HepG2 (cell line): ENCODE measurements at regions of chr15 and their contacts with region 1.

Region 1: DNA sequence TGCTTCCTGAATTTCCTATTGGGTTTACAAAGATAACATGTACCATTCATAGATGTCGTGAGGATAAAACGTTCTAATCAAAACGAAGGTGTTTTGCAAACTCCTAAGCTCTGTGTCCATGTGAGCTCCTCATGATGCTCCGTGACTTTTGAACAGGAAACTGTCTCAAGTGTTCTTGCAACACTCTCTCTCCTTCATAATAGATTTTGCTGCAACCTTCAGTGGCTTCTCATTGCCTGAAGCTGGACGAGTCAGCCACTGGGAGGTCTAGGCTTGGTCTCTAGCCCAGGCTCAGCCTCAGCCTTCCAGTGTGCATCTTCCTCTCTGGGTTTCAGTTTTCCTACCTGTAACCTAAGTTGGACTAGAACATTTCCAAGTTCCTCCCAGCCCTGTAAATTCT is 18.7 kb upstream of the BCL2A1 start:
- DNase-seq: no peak
- ATAC-seq: 0 out of 3 replicates have a peak, but pooled peaks have one; percentile 30
- H3K4me3 ChIP-seq: no peak overlapping the region
- H3K27ac ChIP-seq: no peak overlapping the region
- H3K4me1 ChIP-seq: peaks cover 43% of the 10 kb centered on the region
- H3K27me3 ChIP-seq: no peaks in the 10 kb centered on the region; a peak in 1 of 5 replicates
- CTCF ChIP-seq: no peak
- EP300 ChIP-seq: no peak
- POLR2A ChIP-seq: no peak
- RAD21 ChIP-seq: no peak

Region 2: GRCh38 chr15:79380755-79381497 is 608.8 kb before region 1 on chr15:
- CTCF ChIA-PET with region 1: interaction called, 4 read pairs
- POLR2A ChIA-PET with region 1: no interaction called
- in situ Hi-C with region 1: no loop called
- intact Hi-C with region 1: loop called (anchors 1 kb)
- DNase-seq: peak; percentile 63
- ATAC-seq: peak; percentile 99
- H3K4me3 ChIP-seq: no peak overlapping the region
- H3K27ac ChIP-seq: no peak overlapping the region
- H3K4me1 ChIP-seq: peaks cover 14% of the 10 kb centered on the region
- H3K27me3 ChIP-seq: no peaks in the 10 kb centered on the region; a peak in 1 of 5 replicates
- CTCF ChIP-seq: peak; percentile 86
- EP300 ChIP-seq: no peak
- POLR2A ChIP-seq: no peak
- RAD21 ChIP-seq: peak; percentile 62; the same call in 1 of the 2 replicates

Region 3: GRCh38 chr15:79769069-79769481 is 220.6 kb before region 1 on chr15:
- CTCF ChIA-PET with region 1: no interaction called
- POLR2A ChIA-PET with region 1: no interaction called
- in situ Hi-C with region 1: no loop called
- intact Hi-C with region 1: loop called (anchors 2 kb)
- DNase-seq: peak; percentile 19
- ATAC-seq: peak; percentile 69
- H3K4me3 ChIP-seq: no peak overlapping the region
- H3K27ac ChIP-seq: no peak overlapping the region
- H3K4me1 ChIP-seq: no peaks in the 10 kb centered on the region
- H3K27me3 ChIP-seq: peaks cover 0 to 3% of the 10 kb centered on the region in 2 experiments; a peak in 1 of 5 replicates
- CTCF ChIP-seq: peak; percentile 48
- EP300 ChIP-seq: no peak
- POLR2A ChIP-seq: no peak
- RAD21 ChIP-seq: no peak

Region 4: GRCh38 chr15:79853458-79854328 is 136.0 kb before region 1 on chr15:
- CTCF ChIA-PET with region 1: interaction called, 6 read pairs
- POLR2A ChIA-PET with region 1: no interaction called
- in situ Hi-C with region 1: no loop called
- intact Hi-C with region 1: loop called (anchors 5 kb)
- DNase-seq: peak; percentile 58
- ATAC-seq: peak; percentile 98
- H3K4me3 ChIP-seq: no peak overlapping the region
- H3K27ac ChIP-seq: no peak overlapping the region
- H3K4me1 ChIP-seq: peaks cover 9% of the 10 kb centered on the region
- H3K27me3 ChIP-seq: no peaks in the 10 kb centered on the region
- CTCF ChIP-seq: peak; percentile 88
- EP300 ChIP-seq: no peak
- POLR2A ChIP-seq: no peak
- RAD21 ChIP-seq: peak; percentile 63; the same call in 1 of the 2 replicates

Region 5: DNA sequence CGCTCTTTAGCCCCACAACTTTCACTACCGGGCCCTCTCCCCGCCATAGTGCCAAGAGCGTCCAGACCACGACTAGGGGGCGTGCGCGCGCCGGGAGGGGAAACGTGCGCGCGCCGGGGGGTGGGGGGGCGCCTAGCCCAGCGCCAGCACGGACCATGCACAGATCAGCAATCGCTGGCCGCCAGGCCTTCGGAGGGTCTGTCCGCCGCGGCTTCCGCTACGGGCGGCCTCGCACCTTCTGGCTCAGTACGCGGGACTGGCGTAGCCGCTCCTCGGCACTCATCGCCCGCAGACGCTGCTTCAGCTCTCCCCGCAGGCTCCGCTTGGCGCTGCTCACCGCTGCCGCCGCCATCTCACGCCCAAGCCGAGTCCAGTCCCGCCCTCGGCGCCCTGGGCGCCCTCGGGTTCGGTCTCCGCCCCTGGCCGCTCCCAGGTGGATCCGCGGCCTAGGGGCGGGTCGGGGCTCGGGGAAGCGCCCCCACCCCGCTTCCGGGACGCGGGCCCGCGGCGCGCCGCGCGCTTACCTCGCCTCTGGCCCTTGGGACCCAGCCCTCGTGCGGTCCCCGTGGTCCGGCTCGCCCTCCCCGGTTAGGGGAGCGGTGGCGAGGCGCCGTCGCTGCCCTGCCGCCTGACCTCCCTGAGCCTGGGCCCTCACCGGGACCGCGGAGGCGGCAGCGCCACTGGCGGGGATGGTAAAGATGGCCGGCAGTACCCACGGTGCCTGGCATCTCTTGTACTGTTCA is 92.9 kb before region 1 on chr15 and contains the start of gene MTHFS:
- CTCF ChIA-PET with region 1: interaction called, 8 read pairs
- POLR2A ChIA-PET with region 1: no interaction called
- in situ Hi-C with region 1: loop called (anchors 5 kb)
- intact Hi-C with region 1: loop called (anchors 2 kb)
- DNase-seq: peak; percentile 66
- ATAC-seq: peak; percentile 96
- H3K4me3 ChIP-seq: peak within 1 kb of the TSS; percentile 85 to 88 (median 85)
- H3K27ac ChIP-seq: peak within 1 kb of the TSS; percentile 98
- H3K4me1 ChIP-seq: peaks cover 62% of the 10 kb centered on the region
- H3K27me3 ChIP-seq: no peaks in the 10 kb centered on the region; a peak in 1 of 5 replicates
- CTCF ChIP-seq: peak; percentile 77
- EP300 ChIP-seq: peak in 1 of 2 experiments; percentile 48; a peak in 1 of 4 replicates
- POLR2A ChIP-seq: peak; percentile 96 to 97
- RAD21 ChIP-seq: peak; percentile 80
- total RNA-seq, gene MTHFS: 37.0 and 52.4 TPM in 2 replicates

Region 6: GRCh38 chr15:80058851-80059785 is 69.4 kb after region 1 on chr15 and contains the start of gene ZFAND6:
- CTCF ChIA-PET with region 1: no interaction called
- POLR2A ChIA-PET with region 1: no interaction called
- in situ Hi-C with region 1: no loop called
- intact Hi-C with region 1: loop called (anchors 10 kb)
- DNase-seq: peak; percentile 89
- ATAC-seq: peak; percentile 93
- H3K4me3 ChIP-seq: peak within 1 kb of the TSS; percentile 69 to 97 (median 77)
- H3K27ac ChIP-seq: peak within 1 kb of the TSS; percentile 94
- H3K4me1 ChIP-seq: peaks cover 37% of the 10 kb centered on the region
- H3K27me3 ChIP-seq: no peaks in the 10 kb centered on the region
- CTCF ChIP-seq: no peak; the same call in none of the 2 replicates
- EP300 ChIP-seq: no peak
- POLR2A ChIP-seq: peak; percentile 83 to 97
- RAD21 ChIP-seq: no peak
- total RNA-seq, gene ZFAND6: 84.2 and 116 TPM in 2 replicates

Region 7: GRCh38 chr15:80173022-80173759 is 183.5 kb after region 1 on chr15:
- CTCF ChIA-PET with region 1: interaction called, 5 read pairs
- POLR2A ChIA-PET with region 1: no interaction called
- in situ Hi-C with region 1: no loop called
- intact Hi-C with region 1: loop called (anchors 1 kb)
- DNase-seq: peak; percentile 77
- ATAC-seq: peak; percentile 75
- H3K4me3 ChIP-seq: no peak overlapping the region
- H3K27ac ChIP-seq: peak overlapping the region; percentile 54
- H3K4me1 ChIP-seq: peaks cover 26% of the 10 kb centered on the region
- H3K27me3 ChIP-seq: no peaks in the 10 kb centered on the region
- CTCF ChIP-seq: peak; percentile 95
- EP300 ChIP-seq: 0 out of 4 replicates have a peak, but pooled peaks of 1 of the 2 experiments have one; percentile 5
- POLR2A ChIP-seq: no peak
- RAD21 ChIP-seq: peak; percentile 96